Sigmoid colon (tissue), 7 donors: ENCODE measurements at regions of chr9 and their contacts with region 1.

Region 1: DNA sequence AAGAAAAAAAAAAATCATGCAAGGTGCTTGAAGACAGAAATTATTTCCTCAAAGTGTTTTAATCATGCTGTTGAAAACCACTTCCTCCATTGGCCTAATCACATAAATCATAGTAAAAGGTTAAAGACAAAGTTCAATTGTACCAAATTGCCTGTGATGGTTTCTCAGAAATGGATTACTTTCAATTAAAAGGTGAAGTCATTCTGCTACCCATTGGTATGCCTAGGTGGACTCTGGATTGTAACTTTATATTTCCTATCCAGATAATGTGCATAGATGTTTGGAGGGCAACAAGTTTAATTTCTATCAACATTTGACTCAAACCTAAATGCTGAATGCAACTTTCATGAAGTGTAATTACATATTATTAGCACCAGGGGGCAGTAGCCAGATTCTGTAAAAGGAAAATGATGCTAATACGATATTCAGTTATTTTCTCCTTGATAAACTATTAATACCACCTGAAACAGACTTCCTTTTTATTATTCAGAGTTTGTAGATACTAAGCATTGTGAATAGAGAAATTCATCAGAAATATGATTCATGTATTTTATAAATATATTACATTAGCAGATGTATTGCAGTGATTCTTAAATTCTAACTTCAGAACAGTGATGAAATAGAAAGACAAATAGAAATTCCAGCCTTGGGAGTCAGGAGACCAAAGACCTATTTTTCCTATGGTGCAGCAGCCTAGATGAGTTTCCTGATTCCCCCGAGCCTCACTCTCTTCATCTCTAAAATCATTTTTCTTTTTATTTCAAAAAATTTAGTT is 148.2 kb downstream of the CAAP1 start:
- DNase-seq: no peak
- H3K4me3 ChIP-seq: no peak overlapping the region
- H3K27ac ChIP-seq: no peak overlapping the region
- H3K4me1 ChIP-seq: no peaks in the 10 kb centered on the region
- H3K27me3 ChIP-seq: no peaks in the 10 kb centered on the region
- CTCF ChIP-seq: peak in 3 of 4 experiments; percentile 42 to 76 (median 51)
- EP300 ChIP-seq: no peak
- POLR2A ChIP-seq: no peak

Region 2: DNA sequence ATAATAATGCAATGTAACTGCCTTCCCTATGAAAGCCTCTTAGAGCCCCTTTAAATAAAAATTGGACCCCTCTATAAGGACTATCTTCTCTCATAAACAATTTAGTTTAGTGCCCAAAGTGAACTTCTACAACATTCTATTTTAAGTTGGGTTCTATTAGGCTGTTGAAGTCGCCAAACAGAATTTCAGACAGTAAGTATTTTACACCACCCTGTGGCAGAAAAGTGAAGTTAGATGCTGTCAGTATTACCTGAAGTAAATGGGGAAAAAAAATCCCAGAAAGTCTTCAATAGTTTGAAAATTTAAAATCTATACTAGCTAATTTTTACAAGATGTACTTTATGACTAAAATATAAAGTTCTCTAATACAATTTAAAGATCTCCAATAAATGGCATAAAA is 118.7 kb after region 1 on chr9:
- intact Hi-C with region 1: loop called (anchors 10 kb)
- DNase-seq: no peak
- H3K4me3 ChIP-seq: no peak overlapping the region
- H3K27ac ChIP-seq: no peak overlapping the region
- H3K4me1 ChIP-seq: no peaks in the 10 kb centered on the region
- H3K27me3 ChIP-seq: no peaks in the 10 kb centered on the region
- CTCF ChIP-seq: no peak
- EP300 ChIP-seq: no peak
- POLR2A ChIP-seq: no peak

Region 3: GRCh38 chr9:26975693-26976059 is 231.3 kb after region 1 on chr9:
- intact Hi-C with region 1: loop called (anchors 2 kb)
- DNase-seq: no peak
- H3K4me3 ChIP-seq: no peak overlapping the region
- H3K27ac ChIP-seq: no peak overlapping the region
- H3K4me1 ChIP-seq: peaks cover 0 to 7% (median 5%) of the 10 kb centered on the region in 4 donors
- H3K27me3 ChIP-seq: no peaks in the 10 kb centered on the region
- CTCF ChIP-seq: peak in 3 of 4 experiments; percentile 21 to 51 (median 50)
- EP300 ChIP-seq: no peak
- POLR2A ChIP-seq: no peak

Region 4: DNA sequence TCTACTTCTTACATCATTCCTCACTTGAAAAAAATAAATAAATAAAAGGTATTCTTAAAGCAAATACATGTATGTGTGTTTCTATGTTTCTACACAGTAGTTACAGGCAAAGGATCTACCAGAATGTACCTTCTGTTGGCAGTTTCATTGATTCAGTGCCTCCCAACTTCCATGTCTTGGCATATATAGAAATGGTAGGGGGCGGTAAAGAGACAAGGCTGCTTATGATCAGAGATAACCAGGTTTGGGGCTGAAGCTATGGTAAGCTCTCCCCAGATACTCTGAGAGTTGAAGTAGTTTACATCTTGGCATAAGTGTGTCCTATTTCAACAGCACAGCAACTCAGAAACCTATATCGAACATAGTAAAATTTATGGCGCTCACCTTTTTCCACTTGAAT is 1904.3 kb after region 1 on chr9:
- intact Hi-C with region 1: no loop called
- DNase-seq: no peak
- H3K4me3 ChIP-seq: no peak overlapping the region
- H3K27ac ChIP-seq: no peak overlapping the region
- H3K4me1 ChIP-seq: no peaks in the 10 kb centered on the region
- H3K27me3 ChIP-seq: no peaks in the 10 kb centered on the region
- CTCF ChIP-seq: no peak
- EP300 ChIP-seq: no peak
- POLR2A ChIP-seq: no peak